ENCODE measurements at regions of chr6 and their contacts with region 1.

Region 1: DNA sequence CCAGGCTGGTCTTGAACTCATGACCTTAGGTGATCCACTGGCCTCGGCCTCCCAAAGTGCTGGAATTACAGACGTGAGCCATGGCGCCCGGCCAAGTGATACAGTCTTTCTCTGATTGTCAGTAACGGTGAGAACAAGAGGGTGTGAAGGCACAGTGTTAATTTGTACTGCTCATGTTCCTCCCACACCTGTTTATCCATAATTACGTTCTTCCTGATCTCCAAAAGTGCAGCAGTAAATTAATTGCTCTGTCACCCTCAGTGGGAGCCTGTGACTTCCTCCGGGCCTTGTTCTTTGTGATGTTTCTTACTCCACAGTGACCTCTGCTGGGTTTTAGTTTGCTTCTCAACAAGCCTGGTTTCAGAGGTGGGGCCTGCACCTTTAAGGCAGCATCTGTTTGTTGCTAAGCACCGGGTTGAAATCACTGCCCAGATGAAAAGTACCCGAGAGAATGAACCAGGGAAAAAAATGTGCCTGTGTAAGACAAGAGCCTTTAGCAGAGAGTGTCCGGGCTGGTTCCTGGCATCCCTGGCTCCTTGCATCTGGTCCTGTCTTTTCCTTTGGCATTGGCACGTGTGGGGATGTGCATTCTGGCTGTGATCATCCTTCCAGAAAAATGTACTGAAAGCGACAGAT is 89.1 kb upstream of the CLDN20 start:
- DNase-seq: peak; percentile 80
- H3K4me3 ChIP-seq: no peak overlapping the region
- H3K27ac ChIP-seq: no peak overlapping the region
- H3K4me1 ChIP-seq: peaks cover 17% of the 10 kb centered on the region
- H3K27me3 ChIP-seq: no peaks in the 10 kb centered on the region
- CTCF ChIP-seq: peak; percentile 63 to 71

Region 2: DNA sequence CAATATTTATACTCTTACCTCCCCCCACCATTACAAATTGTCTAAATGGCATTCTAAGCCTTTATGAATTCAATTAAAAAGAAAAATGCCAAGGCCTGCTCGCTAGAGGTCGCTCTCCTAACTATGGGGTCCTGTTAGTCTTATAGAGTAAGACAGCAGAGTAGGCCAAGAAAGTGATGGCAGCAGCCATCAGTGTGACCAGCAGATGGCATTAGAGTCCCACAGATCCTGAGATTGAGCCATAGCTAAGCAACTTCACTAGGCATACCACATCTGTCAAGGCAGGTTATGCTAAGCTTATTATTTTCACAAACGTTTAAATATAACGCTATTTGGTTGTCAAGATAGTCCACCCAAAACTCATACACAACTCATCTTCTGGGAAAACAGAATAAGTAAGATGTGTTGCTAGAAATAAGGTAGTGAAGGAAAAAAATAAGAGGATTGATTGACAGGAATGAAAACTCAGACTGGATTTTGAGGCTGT is 499.0 kb before region 1 on chr6:
- CTCF ChIA-PET with region 1: no interaction called
- dilution Hi-C with region 1: no loop called
- in situ Hi-C with region 1: loop called in 1 of 2 experiments (anchors 10 kb)
- intact Hi-C with region 1: loop called (anchors 1 kb)
- DNase-seq: peak; percentile 86
- H3K4me3 ChIP-seq: no peak overlapping the region
- H3K27ac ChIP-seq: no peak overlapping the region
- H3K4me1 ChIP-seq: no peaks in the 10 kb centered on the region
- H3K27me3 ChIP-seq: no peaks in the 10 kb centered on the region
- CTCF ChIP-seq: peak; percentile 100

Region 3: DNA sequence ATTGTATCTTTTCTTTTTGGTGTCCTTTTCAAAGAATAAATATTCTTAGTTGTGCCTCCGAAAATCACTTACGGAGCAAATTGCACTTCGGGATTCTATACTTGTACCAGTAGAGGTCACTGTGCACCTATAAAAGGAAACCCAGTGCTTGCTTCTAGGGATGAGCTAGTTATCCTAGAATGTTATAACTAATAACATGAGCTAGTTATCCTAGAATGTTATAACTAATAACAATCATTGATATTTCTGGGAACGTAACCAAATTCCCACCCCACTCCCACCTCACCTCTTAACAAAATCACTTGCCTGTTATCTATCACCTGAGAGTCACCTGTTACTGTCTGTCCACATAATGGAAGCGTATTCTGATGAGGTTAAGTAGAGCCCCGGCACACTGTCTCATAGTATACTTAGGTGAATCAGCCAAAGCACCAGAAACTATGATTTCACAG is 306.5 kb before region 1 on chr6:
- CTCF ChIA-PET with region 1: interaction called, 5 read pairs
- dilution Hi-C with region 1: loop called (anchors 5 kb)
- in situ Hi-C with region 1: no loop called
- intact Hi-C with region 1: loop called (anchors 1 kb)
- DNase-seq: peak; percentile 40
- H3K4me3 ChIP-seq: no peak overlapping the region
- H3K27ac ChIP-seq: no peak overlapping the region
- H3K4me1 ChIP-seq: no peaks in the 10 kb centered on the region
- H3K27me3 ChIP-seq: no peaks in the 10 kb centered on the region
- CTCF ChIP-seq: peak; percentile 50 to 70

Region 4: DNA sequence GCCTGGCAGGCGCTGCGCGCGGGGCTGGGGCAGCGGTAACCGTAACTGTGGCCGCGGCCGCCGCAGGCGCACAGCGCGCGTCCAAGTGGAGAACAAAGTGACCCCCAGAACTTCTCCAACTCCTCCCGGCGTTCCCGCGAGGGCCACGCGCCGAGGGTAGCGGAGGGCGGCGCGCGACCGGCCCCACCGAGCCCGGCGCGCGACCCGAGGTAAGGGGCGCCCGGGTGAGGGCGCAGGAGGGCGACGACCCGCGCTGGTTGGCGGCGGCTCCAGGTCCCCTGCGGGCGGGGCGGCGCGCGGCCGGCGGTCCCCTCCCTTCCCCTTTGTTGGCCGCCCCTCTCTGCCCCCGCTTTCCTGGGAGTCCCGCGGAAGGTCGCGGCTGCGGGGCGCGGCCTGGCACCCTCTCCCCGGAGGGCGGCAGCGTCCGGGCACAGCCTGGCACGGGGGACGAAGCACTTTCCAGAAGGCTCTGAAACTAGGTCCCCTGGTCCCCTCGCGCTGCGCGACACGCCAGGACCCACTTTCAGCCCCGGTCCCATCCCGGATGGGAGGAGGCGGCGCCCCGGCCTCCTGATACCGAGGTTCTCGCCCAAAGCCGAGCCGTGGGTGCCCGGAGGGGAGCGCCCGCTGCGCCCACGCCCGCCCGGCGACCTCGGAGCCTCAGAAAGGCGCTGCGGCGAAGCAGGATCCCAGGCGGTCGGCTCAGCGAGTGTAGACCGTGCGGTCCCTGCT is 179.2 kb before region 1 on chr6 and contains the start of gene TIAM2:
- CTCF ChIA-PET with region 1: no interaction called
- dilution Hi-C with region 1: no loop called
- in situ Hi-C with region 1: no loop called
- intact Hi-C with region 1: loop called (anchors 5 kb)
- DNase-seq: no peak
- H3K4me3 ChIP-seq: peak within 1 kb of the TSS; percentile 50 to 57 (median 55)
- H3K27ac ChIP-seq: no peak within 1 kb of the TSS
- H3K4me1 ChIP-seq: peaks cover 8% of the 10 kb centered on the region
- H3K27me3 ChIP-seq: peaks cover 3% of the 10 kb centered on the region
- CTCF ChIP-seq: no peak
- total RNA-seq, gene TIAM2: 4.0 to 13.3 TPM

Region 5: DNA sequence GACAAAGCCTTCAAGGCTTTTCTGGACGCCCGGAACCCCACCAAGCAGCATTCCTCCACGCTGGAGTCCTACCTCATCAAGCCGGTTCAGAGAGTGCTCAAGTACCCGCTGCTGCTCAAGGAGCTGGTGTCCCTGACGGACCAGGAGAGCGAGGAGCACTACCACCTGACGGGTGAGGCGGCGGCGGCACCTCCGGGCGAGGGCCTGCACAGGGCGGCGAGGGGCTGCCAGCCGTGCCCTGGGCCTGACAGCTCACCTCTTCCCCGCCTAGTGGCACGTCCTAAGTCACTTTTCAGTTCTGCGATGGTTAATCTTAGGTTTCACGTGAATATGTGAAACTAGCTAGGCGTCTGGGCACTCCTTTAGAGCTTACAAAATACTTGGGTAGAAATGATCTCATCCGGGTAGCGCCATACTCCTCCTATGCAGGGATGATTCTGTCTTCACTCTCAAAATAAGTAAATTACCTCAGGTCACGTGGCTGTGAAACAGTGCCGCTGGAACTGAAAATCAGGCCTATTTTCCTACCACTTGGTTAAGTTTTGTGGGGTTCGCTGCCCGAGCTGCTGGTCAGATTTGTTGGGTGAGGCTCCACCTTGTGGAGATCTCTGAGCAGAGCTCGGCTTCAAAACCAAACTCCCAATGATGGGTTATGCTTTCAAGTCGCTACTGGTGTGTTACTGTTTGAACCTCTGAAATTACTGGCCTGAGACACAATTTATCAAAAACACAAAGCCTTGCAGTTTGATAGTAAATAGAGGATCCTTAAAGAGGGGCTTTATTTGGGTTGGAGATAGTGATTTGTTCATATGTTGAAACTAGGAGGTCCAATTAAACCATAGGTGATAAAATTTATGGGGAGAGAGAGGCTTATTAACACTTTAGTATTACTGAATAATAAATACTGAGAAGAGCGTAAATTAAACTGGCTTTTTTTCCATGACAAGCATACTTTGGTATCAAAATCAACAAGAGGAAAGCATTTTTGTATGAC is 73.6 kb after region 1 on chr6:
- CTCF ChIA-PET with region 1: interaction called, 28 read pairs
- dilution Hi-C with region 1: loop called (anchors 5 kb)
- in situ Hi-C with region 1: loop called (anchors 5 kb)
- intact Hi-C with region 1: loop called (anchors 1 kb)
- DNase-seq: peak; percentile 26
- H3K4me3 ChIP-seq: no peak overlapping the region
- H3K27ac ChIP-seq: no peak overlapping the region
- H3K4me1 ChIP-seq: peaks cover 6% of the 10 kb centered on the region
- H3K27me3 ChIP-seq: no peaks in the 10 kb centered on the region
- CTCF ChIP-seq: peak; percentile 59 to 82

Region 6: GRCh38 chr6:155314092-155314772 is 139.5 kb after region 1 on chr6 and contains the start of gene TFB1M:
- CTCF ChIA-PET with region 1: interaction called, 8 read pairs
- dilution Hi-C with region 1: no loop called
- in situ Hi-C with region 1: no loop called
- intact Hi-C with region 1: loop called (anchors 2 kb)
- DNase-seq: peak; percentile 99
- H3K4me3 ChIP-seq: peak within 1 kb of the TSS; percentile 80 to 97 (median 84)
- H3K27ac ChIP-seq: peak within 1 kb of the TSS; percentile 88
- H3K4me1 ChIP-seq: peaks cover 24% of the 10 kb centered on the region
- H3K27me3 ChIP-seq: no peaks in the 10 kb centered on the region
- CTCF ChIP-seq: no peak
- total RNA-seq, gene TFB1M: 17.0 to 42.7 TPM

Measured in mammary epithelial cell (primary cell).